Heart right ventricle (tissue), 16 donors: ENCODE measurements at regions of chr6 and their contacts with region 1.

Region 1: DNA sequence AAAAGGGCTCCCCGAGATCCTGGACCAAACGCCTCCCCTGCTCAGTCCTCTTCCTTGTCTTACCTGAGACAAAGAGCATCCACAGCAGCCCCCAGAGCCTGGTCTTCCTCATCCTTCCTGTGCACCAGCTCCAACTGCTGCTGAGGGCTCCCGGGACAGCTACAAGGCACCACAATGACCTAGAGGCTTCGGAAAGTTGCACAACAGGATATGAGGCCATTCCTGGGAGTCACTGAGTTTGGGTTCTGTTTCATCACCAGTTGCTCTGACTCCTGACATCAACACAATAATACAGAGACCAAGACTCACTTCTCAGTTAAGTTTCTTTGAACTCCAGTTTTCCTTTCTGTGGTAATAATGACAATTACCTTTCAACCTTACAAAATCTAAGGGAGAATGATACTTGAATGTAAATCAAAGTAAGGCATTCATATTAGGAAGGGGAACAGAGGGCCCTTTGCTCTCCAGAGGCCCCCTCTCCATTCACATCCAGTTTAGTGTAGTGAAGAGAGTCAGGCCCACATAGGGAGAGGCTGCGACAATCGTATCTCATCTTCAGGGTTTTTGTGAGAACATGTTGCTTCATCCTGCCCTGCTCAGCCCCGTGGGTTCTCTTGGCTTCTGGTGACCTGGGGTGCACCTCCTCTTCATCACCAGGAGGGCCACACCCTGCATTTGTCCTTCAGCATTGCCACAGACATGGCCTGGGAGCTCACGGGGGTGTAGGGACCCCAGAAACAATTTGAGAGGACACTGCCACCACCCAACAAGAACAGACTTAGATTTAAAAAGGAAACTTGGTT is at the start of gene TREM1:
- DNase-seq: peak; percentile 38 to 40
- ATAC-seq: peak; percentile 60 to 88 (median 78)
- H3K4me3 ChIP-seq: peak within 1 kb of the TSS in 1 of 10 donors; percentile 35
- H3K27ac ChIP-seq: peak within 1 kb of the TSS in 5 of 10 donors; percentile 28 to 92 (median 43)
- H3K4me1 ChIP-seq: peaks cover 0 to 37% (median 4%) of the 10 kb centered on the region in 9 donors
- H3K27me3 ChIP-seq: peaks cover 0 to 4% (median 0%) of the 10 kb centered on the region in 7 donors
- CTCF ChIP-seq: no peak
- total RNA-seq, gene TREM1: 0.35 to 6.0 (median 0.99) TPM

Region 2: GRCh38 chr6:41028629-41029412 is 257.9 kb before region 1 on chr6:
- intact Hi-C with region 1: no loop called
- DNase-seq: no peak
- ATAC-seq: peak in 6 of 8 donors; percentile 36 to 77 (median 64)
- H3K4me3 ChIP-seq: peak overlapping the region; percentile 40 to 66 (median 60)
- H3K27ac ChIP-seq: peak overlapping the region; percentile 27 to 86 (median 78)
- H3K4me1 ChIP-seq: peaks cover 3 to 26% (median 10%) of the 10 kb centered on the region in 9 donors
- H3K27me3 ChIP-seq: no peaks in the 10 kb centered on the region
- CTCF ChIP-seq: no peak

Region 3: GRCh38 chr6:41072676-41073623 is 213.8 kb before region 1 on chr6 and contains the start of gene NFYA:
- intact Hi-C with region 1: loop called in 1 of 10 experiments (anchors 5 kb)
- DNase-seq: peak; percentile 100
- ATAC-seq: peak; percentile 80 to 91 (median 83)
- H3K4me3 ChIP-seq: peak within 1 kb of the TSS; percentile 84 to 98 (median 92)
- H3K27ac ChIP-seq: peak within 1 kb of the TSS; percentile 98 to 100 (median 100)
- H3K4me1 ChIP-seq: peaks cover 6 to 43% (median 38%) of the 10 kb centered on the region in 9 donors
- H3K27me3 ChIP-seq: no peaks in the 10 kb centered on the region
- CTCF ChIP-seq: peak in 7 of 9 donors; percentile 19 to 53 (median 36)
- total RNA-seq, gene NFYA: 8.9 to 12.0 (median 10.5) TPM